BJ (cell line): ENCODE measurements at regions of chr6 and their contacts with region 1.

Region 1: DNA sequence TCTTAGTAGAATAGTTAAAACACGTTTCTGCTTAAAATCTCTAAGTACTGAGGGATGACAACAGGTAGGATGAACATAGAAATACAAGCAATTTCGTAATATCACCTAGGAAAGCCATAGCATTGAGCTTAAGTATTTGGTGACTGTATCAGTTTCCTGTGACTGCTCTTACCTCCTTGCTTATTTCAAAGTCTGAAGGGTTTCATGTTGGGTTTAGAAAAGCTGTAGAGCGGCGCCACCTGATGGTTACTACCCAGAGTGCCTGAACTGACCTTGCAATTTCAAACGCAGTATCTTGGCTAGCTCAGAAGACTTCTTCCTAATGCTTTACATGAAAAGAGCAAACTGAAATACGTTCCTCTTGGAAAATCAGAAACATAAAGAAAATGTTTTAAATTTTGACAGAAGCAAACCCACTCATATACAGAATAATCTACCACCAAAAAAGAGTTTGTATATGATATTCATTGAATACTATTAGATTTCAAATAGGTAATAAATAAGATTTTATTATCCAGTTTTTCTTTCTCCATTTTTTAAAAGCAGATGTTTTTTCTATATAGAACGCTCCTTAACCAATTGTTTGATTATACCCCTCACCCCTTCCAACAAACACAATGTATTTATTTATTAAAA is 82.3 kb upstream of the RIPOR2 start:
- DNase-seq: no peak
- H3K4me3 ChIP-seq: no peak overlapping the region
- H3K27me3 ChIP-seq: no peaks in the 10 kb centered on the region
- CTCF ChIP-seq: peak; percentile 67

Region 2: DNA sequence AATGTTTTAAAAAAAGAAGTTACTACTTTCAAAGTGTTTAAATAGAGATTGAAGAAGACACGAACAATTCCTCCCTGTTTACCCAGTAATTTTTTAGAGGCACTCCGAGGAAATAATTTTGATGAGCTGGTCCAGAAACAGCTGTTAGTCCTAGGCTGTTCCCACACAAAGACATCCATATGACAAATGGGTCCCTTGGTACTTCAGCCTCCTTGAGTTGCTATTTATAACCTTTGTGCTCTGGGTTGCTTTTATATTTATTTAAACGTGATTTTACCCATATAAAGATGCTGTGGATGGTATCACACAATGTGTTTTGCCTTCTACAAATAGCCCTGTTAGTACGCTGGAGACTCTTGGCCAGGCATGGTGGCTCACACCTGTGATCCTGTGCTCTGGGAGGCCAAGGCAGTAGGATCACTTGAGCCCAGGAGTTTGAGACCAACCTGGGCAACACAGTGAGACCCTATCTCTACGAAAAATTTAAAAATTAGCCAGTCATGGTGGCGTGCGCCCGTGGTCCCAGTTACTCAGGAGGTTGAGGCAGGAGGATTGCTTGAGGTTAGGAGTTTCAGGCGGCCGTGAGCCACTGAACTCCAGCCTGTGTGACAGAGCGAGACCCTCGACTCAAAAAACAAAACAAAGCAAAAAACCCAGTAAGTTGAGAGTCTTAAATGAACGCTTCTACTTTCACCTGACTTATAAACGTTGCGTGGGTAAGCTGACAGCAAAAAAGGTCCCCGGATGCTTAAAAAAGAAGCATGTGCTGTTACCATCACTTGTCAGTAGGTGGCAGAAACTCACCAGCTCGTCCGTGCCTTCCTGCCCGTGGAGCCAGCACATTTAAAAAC is 162.4 kb before region 1 on chr6:
- CTCF ChIA-PET with region 1: interaction called, 41 read pairs
- POLR2A ChIA-PET with region 1: interaction called, 3 read pairs
- DNase-seq: no peak
- H3K4me3 ChIP-seq: no peak overlapping the region
- H3K27me3 ChIP-seq: no peaks in the 10 kb centered on the region
- CTCF ChIP-seq: peak; percentile 77

Region 3: DNA sequence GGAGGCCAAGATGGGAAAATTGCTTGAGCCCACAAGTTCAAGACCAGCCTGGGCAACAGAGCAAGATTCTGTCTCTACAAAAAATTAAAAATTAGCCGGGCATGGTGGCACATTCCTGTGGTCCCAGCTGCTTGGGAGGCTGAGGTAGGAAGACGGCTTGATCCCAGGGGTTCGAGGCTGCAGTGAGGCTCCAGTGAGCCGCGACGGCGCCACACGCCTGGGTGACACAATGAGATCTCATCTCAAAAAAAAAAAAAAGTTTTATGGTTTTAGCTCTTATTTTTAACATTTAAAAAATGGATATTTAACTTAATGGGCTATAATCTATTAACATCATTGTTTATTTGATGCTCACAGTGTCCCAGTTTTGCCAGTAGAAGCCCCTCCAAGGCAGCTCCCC is 14.9 kb after region 1 on chr6:
- CTCF ChIA-PET with region 1: interaction called, 23 read pairs
- POLR2A ChIA-PET with region 1: no interaction called
- DNase-seq: no peak
- H3K4me3 ChIP-seq: no peak overlapping the region
- H3K27me3 ChIP-seq: no peaks in the 10 kb centered on the region
- CTCF ChIP-seq: no peak

Region 4: GRCh38 chr6:25229671-25230321 is 211.7 kb after region 1 on chr6:
- CTCF ChIA-PET with region 1: no interaction called
- POLR2A ChIA-PET with region 1: no interaction called
- DNase-seq: peak; percentile 98
- H3K4me3 ChIP-seq: no peak overlapping the region
- H3K27me3 ChIP-seq: no peaks in the 10 kb centered on the region
- CTCF ChIP-seq: no peak